Endothelial cell of umbilical vein (primary cell): ENCODE measurements at regions of chr20 and their contacts with region 1.

Region 1: GRCh38 chr20:19583532-19584175 is 174.4 kb upstream of the RIN2 start:
- DNase-seq: peak; percentile 43
- H3K4me3 ChIP-seq: no peak overlapping the region
- H3K27ac ChIP-seq: no peak overlapping the region
- H3K4me1 ChIP-seq: no peaks in the 10 kb centered on the region
- H3K27me3 ChIP-seq: no peaks in the 10 kb centered on the region
- CTCF ChIP-seq: peak; percentile 71 to 74
- POLR2A ChIP-seq: no peak

Region 2: DNA sequence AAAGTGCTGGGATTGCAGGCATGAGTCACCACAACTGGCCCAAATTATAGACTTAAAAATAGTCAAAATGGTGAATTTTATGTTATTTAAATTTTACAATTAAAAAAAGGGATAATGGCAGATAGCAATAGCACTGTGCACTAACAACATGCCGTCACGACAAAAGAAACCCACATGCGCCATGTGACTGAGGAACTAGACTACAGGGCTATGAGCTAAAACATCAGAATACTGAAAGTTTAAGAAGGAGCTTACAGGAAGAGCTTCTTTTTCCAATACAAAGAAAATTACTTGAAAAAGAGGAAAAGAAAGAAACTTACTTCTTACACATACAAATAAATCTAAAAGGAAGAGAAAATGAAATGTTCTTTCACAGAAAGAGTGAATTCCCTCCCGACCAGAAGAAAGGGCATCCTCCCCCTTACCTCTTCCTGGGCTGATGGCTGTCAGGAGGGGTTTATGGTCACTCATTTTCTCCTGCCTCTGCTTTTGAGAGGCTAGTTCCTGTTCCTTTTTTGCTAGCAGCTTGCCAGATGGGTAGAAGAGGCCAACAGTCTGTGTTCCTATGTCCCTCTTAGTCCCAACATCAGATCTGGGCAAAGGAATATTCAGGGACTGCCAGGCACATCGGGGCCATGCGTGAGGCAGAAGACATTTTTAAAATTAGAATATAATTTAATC is 1171.3 kb before region 1 on chr20:
- CTCF ChIA-PET with region 1: interaction called, 23 read pairs
- POLR2A ChIA-PET with region 1: no interaction called
- dilution Hi-C with region 1: no loop called
- intact Hi-C with region 1: loop called (anchors 2 kb)
- DNase-seq: no peak
- H3K4me3 ChIP-seq: no peak overlapping the region
- H3K27ac ChIP-seq: no peak overlapping the region
- H3K4me1 ChIP-seq: no peaks in the 10 kb centered on the region
- H3K27me3 ChIP-seq: no peaks in the 10 kb centered on the region
- CTCF ChIP-seq: no peak
- POLR2A ChIP-seq: no peak

Region 3: DNA sequence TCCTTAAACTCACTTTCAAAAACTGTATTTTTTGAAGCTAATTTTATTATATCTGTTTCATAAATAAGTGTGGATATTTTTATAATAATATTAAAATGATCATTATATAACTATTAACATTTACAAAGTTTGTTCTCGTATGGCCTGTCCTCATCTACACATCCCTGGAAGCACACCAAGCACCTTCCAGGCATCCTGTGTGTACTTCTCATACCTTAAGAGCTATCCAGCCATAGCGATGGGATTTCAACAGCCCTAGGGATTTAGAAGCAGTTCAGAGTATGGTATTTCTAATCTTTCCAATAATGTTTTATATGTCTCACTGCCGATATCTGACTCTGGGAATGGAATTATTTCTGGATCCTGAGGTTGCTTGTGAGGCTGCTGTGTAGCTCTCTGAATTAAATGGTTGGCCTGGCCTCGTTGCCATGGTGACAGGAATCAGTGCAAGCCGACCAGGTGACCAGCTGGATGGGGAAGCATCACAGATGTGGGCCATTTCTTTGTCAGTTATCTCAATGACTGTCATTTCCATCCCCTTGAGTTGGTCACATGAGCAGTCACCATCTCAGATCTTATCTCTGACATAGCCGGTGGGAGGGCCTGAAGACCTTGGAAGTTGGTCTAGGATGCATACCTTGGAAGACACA is 90.8 kb before region 1 on chr20:
- CTCF ChIA-PET with region 1: no interaction called
- POLR2A ChIA-PET with region 1: no interaction called
- dilution Hi-C with region 1: no loop called
- intact Hi-C with region 1: no loop called
- DNase-seq: no peak
- H3K4me3 ChIP-seq: no peak overlapping the region
- H3K27ac ChIP-seq: no peak overlapping the region
- H3K4me1 ChIP-seq: no peaks in the 10 kb centered on the region
- H3K27me3 ChIP-seq: no peaks in the 10 kb centered on the region
- CTCF ChIP-seq: no peak
- POLR2A ChIP-seq: no peak